PC-3 (cell line): ENCODE measurements at regions of chr9 and their contacts with region 1.

Region 1: GRCh38 chr9:1156801-1157550 is 106.8 kb downstream of the DMRT2 start:
- DNase-seq: no peak
- ATAC-seq: no peak
- H3K4me3 ChIP-seq: no peak overlapping the region
- H3K27ac ChIP-seq: no peak overlapping the region
- H3K4me1 ChIP-seq: peaks cover 17% of the 10 kb centered on the region
- H3K27me3 ChIP-seq: no peaks in the 10 kb centered on the region
- CTCF ChIP-seq: no peak

Region 2: GRCh38 chr9:1231998-1232919 is 75.3 kb after region 1 on chr9:
- CTCF ChIA-PET with region 1: no interaction called
- POLR2A ChIA-PET with region 1: no interaction called
- intact Hi-C with region 1: loop called (anchors 10 kb)
- DNase-seq: peak; percentile 83
- ATAC-seq: peak; percentile 88
- H3K4me3 ChIP-seq: peak overlapping the region; percentile 52
- H3K27ac ChIP-seq: peak overlapping the region; percentile 81
- H3K4me1 ChIP-seq: peaks cover 25% of the 10 kb centered on the region
- H3K27me3 ChIP-seq: no peaks in the 10 kb centered on the region
- CTCF ChIP-seq: no peak